HEK293T (cell line): ENCODE measurements at regions of chr16 and their contacts with region 1.

Region 1: DNA sequence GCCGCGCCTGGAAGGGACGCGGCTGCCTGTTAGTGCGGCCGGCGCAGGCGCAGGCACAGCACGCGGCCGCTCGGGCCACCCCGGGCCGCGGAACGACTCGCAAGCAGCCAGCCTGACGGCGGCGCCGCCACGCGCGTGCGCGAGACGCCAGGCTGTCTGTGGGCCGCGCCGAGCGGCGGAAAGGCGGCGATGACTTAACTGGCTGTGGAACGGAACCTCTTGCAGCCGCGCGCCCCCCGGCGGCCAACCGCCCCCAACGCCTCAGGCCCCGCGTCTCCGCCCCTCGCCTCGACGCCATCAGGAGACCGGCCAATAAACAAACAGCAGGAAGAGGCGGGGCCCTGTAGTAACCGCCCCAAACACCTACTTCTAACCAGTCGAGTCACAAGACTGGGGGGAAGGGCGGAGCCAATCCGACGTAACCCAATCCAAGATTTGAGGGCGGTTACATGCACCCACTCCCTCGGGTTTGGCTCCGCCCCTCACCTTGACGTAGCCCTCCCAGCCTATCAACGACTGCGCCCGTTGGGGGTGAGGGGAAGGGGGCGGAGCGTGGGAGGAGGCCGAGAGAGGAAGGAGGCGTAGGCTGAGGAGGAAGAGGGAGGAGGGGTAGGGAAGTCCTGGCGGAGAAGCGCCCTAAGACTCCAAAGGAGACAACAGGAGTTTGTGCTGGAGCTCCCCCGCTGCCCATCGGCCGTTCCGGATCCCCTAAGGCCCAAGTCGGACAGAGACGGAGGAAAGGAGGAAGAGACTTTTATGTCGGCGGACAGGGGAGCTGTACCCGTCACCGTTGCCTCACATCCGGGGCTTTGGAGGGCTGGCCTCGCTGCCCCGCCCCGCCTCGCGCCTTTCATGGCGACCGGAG is at the start of gene FBRS:
- DNase-seq: peak; percentile 100

Region 2: GRCh38 chr16:30509081-30509765 is 148.9 kb before region 1 on chr16:
- CTCF ChIA-PET with region 1: no interaction called
- POLR2A ChIA-PET with region 1: no interaction called
- DNase-seq: no peak

Region 3: DNA sequence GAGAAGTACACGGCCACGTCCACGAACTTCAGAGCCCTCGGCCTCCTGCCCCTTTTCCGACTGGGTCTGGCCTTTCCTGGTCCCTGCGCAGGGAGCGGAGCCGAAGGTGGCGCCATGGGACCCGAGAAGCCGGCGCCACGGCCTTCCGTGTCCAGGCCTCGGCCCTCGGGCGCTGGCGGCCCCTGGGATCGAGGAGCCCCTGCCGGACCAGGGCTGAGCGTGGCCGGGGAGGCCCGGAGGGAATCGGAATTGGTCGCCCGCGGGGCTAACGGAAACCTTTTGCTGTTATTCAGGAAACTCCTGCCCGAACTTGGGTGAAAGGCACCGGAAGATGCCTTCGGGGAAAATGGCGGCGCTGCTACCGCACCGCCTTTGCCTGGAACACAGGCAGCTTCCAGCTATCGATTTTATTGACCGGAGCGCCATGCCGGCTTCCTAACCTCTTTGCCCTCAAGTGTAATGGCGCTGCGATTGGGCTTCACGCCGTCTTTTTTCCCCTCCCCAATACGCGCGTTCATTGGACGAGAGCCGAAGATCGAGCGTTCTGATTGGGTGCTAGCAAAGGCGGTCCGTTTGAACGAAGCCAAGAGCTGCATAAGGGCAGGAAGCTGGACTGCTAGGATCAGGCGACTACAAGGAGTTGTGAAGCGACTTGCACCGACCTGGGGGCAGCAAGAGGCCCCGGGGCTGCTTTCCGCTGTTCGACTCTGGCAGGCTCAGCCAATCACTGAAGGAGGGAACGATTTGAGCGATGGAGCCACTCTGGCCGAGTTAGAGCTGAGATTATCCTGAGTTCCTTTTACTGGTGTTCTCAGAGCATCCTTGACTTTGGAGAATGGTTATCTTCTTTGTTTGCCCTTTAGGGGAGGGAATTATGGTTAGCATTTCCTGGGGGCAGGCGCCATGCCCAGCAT is 47.9 kb before region 1 on chr16 and contains the start of gene ZNF689:
- CTCF ChIA-PET with region 1: interaction called, 6 read pairs
- POLR2A ChIA-PET with region 1: interaction called, 14 read pairs
- DNase-seq: peak; percentile 100

Region 4: GRCh38 chr16:30644334-30644830 is 13.7 kb before region 1 on chr16:
- CTCF ChIA-PET with region 1: interaction called, 3 read pairs
- POLR2A ChIA-PET with region 1: interaction called, 20 read pairs
- DNase-seq: no peak

Region 5: DNA sequence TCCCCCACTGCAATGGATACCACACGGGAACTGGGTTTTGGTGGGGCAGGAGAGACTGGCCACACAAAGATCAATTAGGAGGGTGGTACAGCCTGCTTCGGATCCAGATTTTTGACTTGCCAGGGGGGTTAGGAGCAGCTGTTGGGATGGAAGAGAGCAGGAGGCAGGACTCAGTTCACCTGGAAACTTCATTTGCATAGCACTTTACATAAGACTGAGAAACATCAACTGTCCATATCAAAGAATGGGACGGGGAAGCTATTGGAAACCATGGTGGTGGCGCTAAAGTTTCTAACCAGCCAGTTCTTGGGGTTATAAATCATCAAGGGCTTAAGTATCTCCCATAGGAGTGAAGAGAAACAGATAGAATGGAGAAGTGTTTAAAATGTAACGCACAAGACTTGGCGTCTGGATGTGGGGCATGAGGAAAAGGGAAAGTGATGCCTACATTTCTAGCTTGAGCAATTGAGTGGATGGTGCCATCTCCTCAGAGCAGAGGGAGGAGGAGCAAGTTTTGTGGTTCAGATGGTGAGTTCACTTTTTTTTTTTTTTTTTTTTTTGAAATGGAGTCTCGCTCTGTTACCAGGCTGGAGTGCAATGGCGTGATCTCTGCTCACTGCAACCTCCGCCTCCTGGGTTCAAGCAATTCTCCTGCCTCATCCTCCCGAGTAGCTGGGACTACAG is 34.4 kb after region 1 on chr16:
- CTCF ChIA-PET with region 1: interaction called, 9 read pairs
- POLR2A ChIA-PET with region 1: interaction called, 57 read pairs
- DNase-seq: no peak

Region 6: GRCh38 chr16:30698139-30698815 is 40.2 kb after region 1 on chr16:
- CTCF ChIA-PET with region 1: interaction called, 9 read pairs
- POLR2A ChIA-PET with region 1: interaction called, 57 read pairs
- DNase-seq: peak; percentile 99

Region 7: GRCh38 chr16:30740364-30741251 is 82.5 kb after region 1 on chr16:
- CTCF ChIA-PET with region 1: no interaction called
- POLR2A ChIA-PET with region 1: no interaction called
- DNase-seq: no peak